ENCODE measurements at regions of chr3 and their contacts with region 1.

Region 1: DNA sequence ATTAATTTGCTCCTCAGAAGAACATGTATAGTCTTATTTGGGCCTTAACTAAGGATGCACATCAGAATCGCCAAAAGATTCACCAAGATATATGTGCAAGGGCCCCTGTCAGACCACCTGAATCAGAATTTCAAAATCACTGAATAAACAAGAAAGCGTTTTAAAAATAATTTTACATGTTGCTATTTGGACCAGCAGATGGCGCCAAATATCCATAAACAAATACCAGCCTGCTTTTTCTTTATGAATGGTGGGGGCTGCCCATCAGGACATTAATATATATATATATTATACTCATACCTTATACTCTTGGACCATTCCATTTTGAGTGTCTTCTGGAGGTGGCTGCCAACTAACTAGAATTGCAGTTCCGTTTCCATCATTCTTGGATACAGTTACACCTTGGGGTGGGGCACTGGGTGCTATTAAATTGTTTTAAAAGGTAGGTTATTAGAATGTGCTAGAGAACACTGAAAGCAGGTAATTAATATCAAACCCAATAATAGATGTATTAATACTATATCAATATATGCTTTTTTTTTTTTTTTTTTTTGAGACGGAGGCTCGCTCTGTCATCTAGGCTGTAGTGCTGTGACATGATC is 1108.3 kb downstream of the ROBO1 start:
- DNase-seq: peak; percentile 49 to 77 (median 62)
- H3K4me3 ChIP-seq: no peak overlapping the region
- H3K27ac ChIP-seq: no peak overlapping the region
- H3K4me1 ChIP-seq: no peaks in the 10 kb centered on the region
- H3K27me3 ChIP-seq: no peaks in the 10 kb centered on the region

Region 2: GRCh38 chr3:78041486-78041885 is 618.0 kb before region 1 on chr3:
- CTCF ChIA-PET with region 1: no interaction called
- POLR2A ChIA-PET with region 1: no interaction called
- DNase-seq: no peak
- H3K4me3 ChIP-seq: no peak overlapping the region
- H3K27ac ChIP-seq: no peak overlapping the region
- H3K4me1 ChIP-seq: no peaks in the 10 kb centered on the region
- H3K27me3 ChIP-seq: no peaks in the 10 kb centered on the region

Region 3: GRCh38 chr3:78529601-78530000 is 129.9 kb before region 1 on chr3:
- CTCF ChIA-PET with region 1: no interaction called
- POLR2A ChIA-PET with region 1: no interaction called
- DNase-seq: no peak
- H3K4me3 ChIP-seq: no peak overlapping the region
- H3K27ac ChIP-seq: no peak overlapping the region
- H3K4me1 ChIP-seq: no peaks in the 10 kb centered on the region
- H3K27me3 ChIP-seq: no peaks in the 10 kb centered on the region

Region 4: DNA sequence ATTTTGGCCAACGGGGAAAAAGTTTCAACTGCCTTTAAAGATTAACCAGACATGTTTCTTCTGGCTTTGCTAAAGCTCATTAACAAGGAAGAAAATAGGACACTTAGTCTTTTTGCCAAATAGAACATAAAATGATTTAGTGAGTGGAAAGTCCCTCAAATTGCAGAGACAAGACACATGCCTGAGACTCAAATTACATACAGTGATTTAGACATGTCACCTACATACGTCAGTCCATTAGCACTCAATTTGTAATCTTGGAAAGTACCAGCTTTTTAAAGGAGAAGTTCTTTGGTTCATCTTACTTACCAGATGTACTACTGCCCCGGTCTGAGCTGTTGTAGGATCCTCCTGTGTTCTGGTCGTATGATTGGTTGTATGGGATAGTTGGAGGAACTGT is 25.9 kb before region 1 on chr3:
- CTCF ChIA-PET with region 1: no interaction called
- POLR2A ChIA-PET with region 1: no interaction called
- DNase-seq: no peak
- H3K4me3 ChIP-seq: no peak overlapping the region
- H3K27ac ChIP-seq: no peak overlapping the region
- H3K4me1 ChIP-seq: no peaks in the 10 kb centered on the region
- H3K27me3 ChIP-seq: no peaks in the 10 kb centered on the region

Region 5: DNA sequence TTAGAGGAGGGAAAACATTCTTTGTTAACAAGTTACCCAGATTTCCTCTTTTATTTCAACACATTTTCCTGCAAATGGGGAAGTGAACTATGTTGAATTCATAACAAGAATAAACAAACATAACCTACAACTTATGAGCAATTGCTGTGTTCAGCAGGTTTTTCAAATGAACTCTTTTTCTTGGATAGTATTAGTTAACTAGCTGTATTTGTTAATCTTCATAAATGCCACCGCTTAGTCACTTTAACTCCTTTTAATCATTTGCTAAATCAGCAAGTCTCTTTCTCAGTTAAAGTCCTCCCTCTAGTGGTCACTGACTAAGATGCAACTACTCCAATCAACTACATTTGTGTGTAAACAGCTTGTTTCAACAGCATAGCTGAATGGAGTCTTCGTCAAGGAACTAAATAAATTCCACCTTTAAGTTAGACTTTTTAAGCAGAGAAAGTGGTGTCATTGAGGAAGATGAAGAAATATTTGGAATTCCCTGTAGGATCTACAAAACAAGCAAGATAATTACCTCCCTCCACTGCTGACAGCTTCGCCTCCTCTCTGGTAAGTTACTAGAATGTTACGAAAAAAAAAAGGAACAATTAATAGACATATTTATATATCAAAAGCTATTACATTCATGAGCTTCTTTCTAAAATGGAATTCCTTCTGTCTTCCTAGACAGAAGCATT is 13.7 kb before region 1 on chr3:
- CTCF ChIA-PET with region 1: interaction called, 21 read pairs
- POLR2A ChIA-PET with region 1: no interaction called
- DNase-seq: peak; percentile 56 to 75 (median 68)
- H3K4me3 ChIP-seq: no peak overlapping the region
- H3K27ac ChIP-seq: no peak overlapping the region
- H3K4me1 ChIP-seq: peaks cover 0 to 9% (median 2%) of the 10 kb centered on the region in 4 experiments
- H3K27me3 ChIP-seq: no peaks in the 10 kb centered on the region

Region 6: DNA sequence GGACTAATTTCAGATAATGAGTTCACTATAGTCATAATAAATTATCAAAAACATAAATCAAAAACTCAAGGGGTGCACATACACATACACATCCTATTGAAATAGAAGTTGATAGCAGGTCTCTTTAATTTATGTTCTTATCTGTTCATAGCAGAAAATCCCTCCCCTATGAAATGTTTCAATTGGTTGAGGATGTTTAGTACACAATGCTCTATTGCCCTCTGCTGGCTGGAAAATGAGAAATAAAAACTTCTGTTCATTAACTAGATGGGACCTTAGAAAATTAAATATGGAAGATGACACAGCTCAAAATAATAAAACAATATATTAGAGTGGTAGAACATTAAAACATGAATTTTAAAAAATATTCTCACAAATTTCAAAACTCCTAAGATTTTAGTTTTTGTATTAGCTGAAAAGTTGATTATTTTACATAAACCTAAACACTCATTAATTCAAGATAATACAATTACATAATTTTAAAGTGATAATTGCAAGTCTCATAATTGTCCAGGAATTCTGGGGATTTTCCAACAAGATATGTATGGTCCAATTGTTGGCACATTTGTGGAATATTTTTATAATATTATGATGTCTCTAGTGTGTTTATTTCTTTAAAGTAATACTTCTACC is 373.3 kb after region 1 on chr3:
- CTCF ChIA-PET with region 1: interaction called, 76 read pairs
- POLR2A ChIA-PET with region 1: no interaction called
- DNase-seq: peak; percentile 59 to 85 (median 76)
- H3K4me3 ChIP-seq: no peak overlapping the region
- H3K27ac ChIP-seq: no peak overlapping the region
- H3K4me1 ChIP-seq: no peaks in the 10 kb centered on the region
- H3K27me3 ChIP-seq: peaks cover 0 to 2% (median 0%) of the 10 kb centered on the region in 5 experiments

Measured in common myeloid progenitor, CD34-positive (primary cell).